ENCODE measurements at regions of chr20 and their contacts with region 1.

Region 1: GRCh38 chr20:57498425-57499400 is 26.2 kb downstream of the CTCFL start:
- DNase-seq: peak in 2 of 10 donors; percentile 29 to 47
- H3K4me3 ChIP-seq: no peak overlapping the region
- H3K27ac ChIP-seq: no peak overlapping the region
- H3K27me3 ChIP-seq: no peaks in the 10 kb centered on the region
- CTCF ChIP-seq: peak in 23 of 56 donors; percentile 4 to 42 (median 22)

Region 2: GRCh38 chr20:57383447-57384347 is 115.0 kb before region 1 on chr20:
- intact Hi-C with region 1: loop called (anchors 1 to 2 kb)
- DNase-seq: peak in 1 of 10 donors; percentile 4
- H3K4me3 ChIP-seq: no peak overlapping the region
- H3K27ac ChIP-seq: no peak overlapping the region
- H3K27me3 ChIP-seq: no peaks in the 10 kb centered on the region
- CTCF ChIP-seq: no peak

Region 3: DNA sequence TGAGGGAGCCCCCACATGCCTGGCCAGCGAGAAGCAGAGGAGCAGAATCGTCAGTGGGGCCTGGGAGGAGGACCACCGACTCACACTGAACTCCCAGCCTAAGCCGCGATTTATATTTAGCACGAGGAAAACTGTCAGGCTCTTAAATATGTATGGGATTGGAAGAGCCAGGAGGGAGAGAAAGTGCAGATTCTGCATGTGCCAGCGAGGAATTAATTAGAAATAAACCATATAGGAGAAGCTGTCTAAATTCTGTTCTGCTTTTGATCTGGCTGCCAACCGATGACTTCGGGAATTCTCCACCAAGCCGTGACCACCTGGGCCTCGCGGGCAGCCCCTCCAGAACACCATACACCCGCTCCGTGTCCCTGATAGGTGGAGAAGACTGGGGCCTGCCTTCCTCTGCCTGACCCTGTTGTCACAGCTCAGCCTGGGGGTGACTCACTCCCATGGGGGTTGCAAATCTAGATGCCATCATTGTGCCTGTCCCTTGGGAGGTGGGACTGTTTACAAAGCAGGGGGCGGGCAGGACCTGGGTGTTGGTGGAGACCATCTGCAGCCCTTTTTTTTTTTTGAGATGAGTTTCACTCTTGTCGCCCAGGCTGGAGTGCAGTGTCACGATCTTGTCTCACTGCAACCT is 302.2 kb after region 1 on chr20:
- intact Hi-C with region 1: no loop called
- DNase-seq: no peak
- H3K4me3 ChIP-seq: no peak overlapping the region
- H3K27ac ChIP-seq: no peak overlapping the region
- H3K27me3 ChIP-seq: peaks cover 0 to 3% (median 0%) of the 10 kb centered on the region in 45 donors
- CTCF ChIP-seq: no peak

Region 4: DNA sequence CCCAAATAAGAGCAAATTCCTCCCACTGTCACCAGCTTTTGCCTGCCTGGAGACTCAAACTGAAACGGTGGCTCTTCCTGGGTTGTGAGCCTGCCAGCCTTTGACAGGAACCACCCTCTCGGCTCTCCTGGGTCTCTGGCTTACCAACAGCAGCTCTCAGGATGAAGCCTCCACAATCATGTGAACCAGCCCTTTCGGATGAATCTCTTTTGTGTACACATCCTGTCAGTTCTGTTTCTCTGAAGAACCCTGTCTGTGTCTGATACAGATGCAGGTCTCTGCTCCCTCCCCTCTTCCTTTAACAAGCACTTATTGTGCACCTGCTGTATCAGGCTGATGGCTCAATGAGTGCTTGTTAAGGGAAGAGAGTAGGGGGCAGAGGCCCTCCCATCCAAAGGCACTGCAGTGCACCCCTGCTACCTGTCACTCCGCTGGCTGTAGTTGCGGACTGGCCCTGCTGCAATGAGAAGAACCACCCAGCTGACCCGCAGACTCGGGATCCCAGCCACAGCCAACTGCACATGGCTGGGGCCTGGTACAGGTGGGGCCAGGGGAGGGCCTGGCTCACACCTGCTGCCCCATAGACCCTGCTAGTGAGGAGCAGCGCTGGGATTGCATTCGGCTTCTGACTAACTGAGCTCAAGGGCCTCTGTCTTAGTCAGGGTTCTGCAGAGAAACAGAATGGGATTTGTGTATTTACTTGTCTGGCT is 331.2 kb after region 1 on chr20:
- intact Hi-C with region 1: no loop called
- DNase-seq: no peak
- H3K4me3 ChIP-seq: no peak overlapping the region
- H3K27ac ChIP-seq: no peak overlapping the region
- H3K27me3 ChIP-seq: peaks cover 0 to 15% (median 0%) of the 10 kb centered on the region in 45 donors
- CTCF ChIP-seq: no peak

Region 5: DNA sequence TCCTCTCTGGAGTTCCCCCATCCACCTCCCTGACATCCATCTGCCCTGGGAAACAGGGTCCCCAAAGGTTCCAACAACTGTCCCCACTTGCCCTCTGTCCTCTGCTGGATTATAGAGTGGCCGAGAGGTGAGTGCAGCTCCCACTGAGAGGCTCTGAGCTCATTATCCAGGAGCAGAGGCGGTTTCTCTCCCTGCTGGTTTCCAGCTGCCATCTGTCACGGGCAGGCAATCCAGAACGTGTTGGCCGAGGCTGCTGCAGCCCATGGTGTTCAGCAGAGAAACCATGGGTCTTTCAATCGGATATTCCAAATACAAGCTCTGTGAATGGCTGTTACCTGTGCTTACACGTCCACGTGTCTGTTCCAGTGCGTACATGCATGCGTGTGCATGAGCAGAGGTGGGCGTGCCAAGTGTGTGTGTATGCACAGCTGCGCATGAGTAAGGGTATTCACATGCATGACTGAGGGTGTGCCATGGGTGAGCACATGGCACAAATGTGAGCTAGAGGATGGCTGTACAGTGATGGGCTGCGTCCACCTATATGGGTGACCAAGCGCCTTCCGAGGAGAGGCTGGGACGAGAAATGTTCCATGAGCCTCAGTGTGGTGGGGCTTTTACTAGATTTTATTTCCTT is 394.8 kb after region 1 on chr20:
- intact Hi-C with region 1: no loop called
- DNase-seq: peak in 3 of 10 donors; percentile 26 to 58 (median 46)
- H3K4me3 ChIP-seq: no peak overlapping the region
- H3K27ac ChIP-seq: no peak overlapping the region
- H3K27me3 ChIP-seq: peaks cover 0 to 8% (median 0%) of the 10 kb centered on the region in 45 donors
- CTCF ChIP-seq: no peak